ENCODE measurements at regions of chr6 and their contacts with region 1.

Region 1: GRCh38 chr6:169959136-169960002 is 207.9 kb downstream of the ERMARD start:
- DNase-seq: peak; percentile 71
- H3K4me3 ChIP-seq: no peak overlapping the region
- H3K27ac ChIP-seq: peak overlapping the region in 1 of 2 donors; percentile 35
- H3K4me1 ChIP-seq: no peaks in the 10 kb centered on the region
- H3K27me3 ChIP-seq: no peaks in the 10 kb centered on the region
- CTCF ChIP-seq: peak in 2 of 4 experiments; percentile 42 to 47
- POLR2A ChIP-seq: no peak

Region 2: GRCh38 chr6:169921853-169922824 is 37.2 kb before region 1 on chr6:
- intact Hi-C with region 1: no loop called
- DNase-seq: no peak
- H3K4me3 ChIP-seq: no peak overlapping the region
- H3K27ac ChIP-seq: no peak overlapping the region
- H3K4me1 ChIP-seq: no peaks in the 10 kb centered on the region
- H3K27me3 ChIP-seq: no peaks in the 10 kb centered on the region
- CTCF ChIP-seq: no peak
- POLR2A ChIP-seq: no peak

Region 3: DNA sequence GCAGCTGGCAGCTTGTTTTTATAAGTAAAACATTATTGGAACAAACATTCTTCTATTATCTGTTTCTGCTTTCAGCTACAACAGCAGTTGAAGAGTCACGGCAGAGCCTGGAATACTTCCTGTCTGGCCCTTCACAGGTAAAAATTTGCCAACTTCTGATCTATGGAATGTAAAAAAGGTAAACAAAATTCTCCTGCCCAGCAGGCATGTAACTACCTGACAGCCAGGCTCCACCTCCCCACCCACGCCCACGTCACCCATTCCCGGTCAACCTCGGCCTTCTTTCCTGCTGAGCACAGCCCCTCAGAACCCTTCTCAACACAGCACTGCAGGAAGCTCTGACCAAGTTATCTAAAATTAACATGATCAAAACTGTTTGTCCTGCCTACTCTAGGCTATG is 165.5 kb after region 1 on chr6:
- intact Hi-C with region 1: no loop called
- DNase-seq: peak; percentile 79
- H3K4me3 ChIP-seq: no peak overlapping the region
- H3K27ac ChIP-seq: peak overlapping the region; percentile 40 to 59
- H3K4me1 ChIP-seq: peaks cover 6% of the 10 kb centered on the region
- H3K27me3 ChIP-seq: no peaks in the 10 kb centered on the region
- CTCF ChIP-seq: no peak
- POLR2A ChIP-seq: no peak

Region 4: DNA sequence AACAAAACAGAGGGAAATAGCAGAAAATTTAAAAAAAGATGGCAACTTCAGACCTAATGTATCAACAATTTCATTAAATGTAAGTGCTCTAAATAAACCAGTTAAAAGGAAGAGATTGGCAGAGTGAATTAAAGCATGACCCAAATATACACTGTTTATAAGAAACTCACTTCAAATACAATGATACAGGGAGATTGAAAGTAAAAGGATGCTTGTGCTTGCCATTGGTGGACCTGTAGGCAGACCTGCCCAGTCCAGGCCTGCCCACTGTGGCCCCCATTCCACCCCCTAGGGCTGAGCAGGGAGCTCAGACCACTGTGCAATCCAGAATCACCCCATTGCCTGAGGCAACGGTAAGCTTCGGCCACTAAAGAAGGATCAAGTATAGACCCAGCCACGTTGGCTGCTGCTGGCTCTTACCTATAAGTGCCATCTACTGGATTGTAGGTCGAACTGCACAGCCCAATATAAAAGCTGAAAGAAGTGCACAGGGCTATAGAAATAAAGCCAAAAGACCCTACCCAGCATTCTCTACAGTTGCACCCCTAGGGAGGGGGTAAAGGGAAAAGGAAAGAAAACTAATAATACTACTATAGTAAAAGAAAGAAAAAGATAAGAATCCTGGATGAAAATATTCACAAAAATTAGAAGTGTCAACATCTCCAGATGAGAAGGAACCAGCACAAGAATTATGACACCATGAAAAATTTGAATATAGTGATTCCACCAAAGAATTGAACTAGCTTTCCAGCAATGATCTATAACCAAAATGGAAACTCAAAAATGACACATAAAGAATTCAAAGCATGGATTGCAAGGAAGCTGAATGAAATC is 557.6 kb after region 1 on chr6:
- intact Hi-C with region 1: loop called (anchors 5 kb)
- DNase-seq: peak; percentile 34
- H3K4me3 ChIP-seq: no peak overlapping the region
- H3K27ac ChIP-seq: no peak overlapping the region
- H3K4me1 ChIP-seq: no peaks in the 10 kb centered on the region
- H3K27me3 ChIP-seq: no peaks in the 10 kb centered on the region
- CTCF ChIP-seq: peak; percentile 14 to 75 (median 56)
- POLR2A ChIP-seq: no peak

Measured in prostate gland (tissue), 2 donors.